Head of caudate nucleus (tissue), 42 donors: ENCODE measurements at regions of chr14 and their contacts with region 1.

Region 1: DNA sequence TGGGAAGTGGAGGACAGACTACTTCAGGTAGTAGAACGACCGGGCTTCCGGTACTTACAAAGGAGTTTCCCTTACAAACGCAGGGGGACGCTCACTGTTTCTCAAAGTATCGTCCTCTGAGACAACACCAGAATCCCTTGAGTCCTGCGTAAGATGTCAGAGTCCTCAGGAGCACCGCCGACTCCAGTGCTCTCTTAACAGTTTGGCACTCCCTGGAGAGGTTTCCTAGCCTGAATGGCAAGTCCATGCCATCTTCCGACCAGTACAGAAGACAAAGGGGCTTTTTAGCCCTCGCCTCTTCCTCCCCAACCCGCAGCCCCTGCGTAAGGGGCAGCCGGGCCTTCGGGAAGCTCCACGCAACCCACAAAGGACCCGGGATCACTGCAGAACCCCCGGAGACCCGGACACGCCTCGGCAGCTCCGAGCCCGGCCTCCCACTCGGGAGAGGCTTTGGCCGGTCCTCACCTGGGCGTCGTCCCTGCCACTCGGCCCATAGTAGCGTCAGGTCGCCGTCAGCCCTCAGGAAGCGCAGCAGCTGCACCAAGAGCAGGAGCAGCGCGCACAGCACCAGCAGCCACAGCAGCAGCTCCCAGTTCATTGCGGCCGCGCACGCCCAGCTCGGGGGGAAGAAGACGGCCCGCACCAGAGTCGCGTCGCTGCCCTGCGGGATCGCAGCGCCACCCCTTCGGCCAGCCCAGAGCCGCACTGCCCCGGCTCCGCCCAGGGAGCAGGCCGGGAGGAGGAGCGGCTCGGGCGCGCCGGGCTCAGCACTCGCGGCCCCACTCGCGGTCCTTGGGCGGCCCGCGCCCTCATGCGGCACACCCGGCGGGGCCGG is at the start of gene DHRS7:
- DNase-seq: peak; percentile 57 to 94 (median 86)

Region 2: DNA sequence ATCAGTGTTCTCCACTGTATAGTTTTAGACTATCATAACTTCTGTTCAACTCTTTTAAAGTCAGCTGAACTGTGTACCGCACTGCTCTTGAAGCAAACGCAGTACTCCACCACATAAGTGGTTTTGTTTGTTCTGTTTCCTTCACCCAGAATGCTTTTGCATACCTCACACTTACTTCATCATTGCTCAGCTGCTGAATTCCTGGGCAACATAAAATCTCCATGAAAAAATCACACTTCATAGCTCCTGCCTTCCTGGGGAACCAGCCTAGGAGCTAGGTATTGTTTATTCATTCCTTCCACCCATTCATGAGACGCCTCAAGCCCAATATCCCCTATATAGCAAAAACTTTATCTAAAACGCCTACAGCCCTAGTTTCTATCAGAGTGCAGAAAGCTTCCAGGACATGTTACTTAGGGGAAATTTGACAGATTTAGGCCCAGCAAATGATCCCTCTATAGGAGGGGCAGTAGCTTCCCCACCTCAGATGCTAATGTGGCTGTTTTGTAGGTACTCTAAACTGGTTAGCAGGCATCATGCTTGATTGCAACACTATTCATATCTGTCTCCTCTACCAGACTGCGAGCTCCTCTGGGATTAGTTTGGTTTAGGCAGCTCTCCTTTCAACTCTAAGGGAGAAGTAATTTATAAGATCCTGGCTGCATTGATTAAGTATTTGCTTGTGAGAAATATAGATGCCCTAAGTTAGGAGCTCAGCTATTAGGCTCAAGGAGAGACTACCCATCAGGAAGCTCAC is 200.5 kb before region 1 on chr14:
- intact Hi-C with region 1: loop called (anchors 5 kb)
- DNase-seq: no peak

Region 3: GRCh38 chr14:60079724-60080123 is 85.2 kb before region 1 on chr14:
- intact Hi-C with region 1: loop called (anchors 5 kb)
- DNase-seq: no peak

Region 4: DNA sequence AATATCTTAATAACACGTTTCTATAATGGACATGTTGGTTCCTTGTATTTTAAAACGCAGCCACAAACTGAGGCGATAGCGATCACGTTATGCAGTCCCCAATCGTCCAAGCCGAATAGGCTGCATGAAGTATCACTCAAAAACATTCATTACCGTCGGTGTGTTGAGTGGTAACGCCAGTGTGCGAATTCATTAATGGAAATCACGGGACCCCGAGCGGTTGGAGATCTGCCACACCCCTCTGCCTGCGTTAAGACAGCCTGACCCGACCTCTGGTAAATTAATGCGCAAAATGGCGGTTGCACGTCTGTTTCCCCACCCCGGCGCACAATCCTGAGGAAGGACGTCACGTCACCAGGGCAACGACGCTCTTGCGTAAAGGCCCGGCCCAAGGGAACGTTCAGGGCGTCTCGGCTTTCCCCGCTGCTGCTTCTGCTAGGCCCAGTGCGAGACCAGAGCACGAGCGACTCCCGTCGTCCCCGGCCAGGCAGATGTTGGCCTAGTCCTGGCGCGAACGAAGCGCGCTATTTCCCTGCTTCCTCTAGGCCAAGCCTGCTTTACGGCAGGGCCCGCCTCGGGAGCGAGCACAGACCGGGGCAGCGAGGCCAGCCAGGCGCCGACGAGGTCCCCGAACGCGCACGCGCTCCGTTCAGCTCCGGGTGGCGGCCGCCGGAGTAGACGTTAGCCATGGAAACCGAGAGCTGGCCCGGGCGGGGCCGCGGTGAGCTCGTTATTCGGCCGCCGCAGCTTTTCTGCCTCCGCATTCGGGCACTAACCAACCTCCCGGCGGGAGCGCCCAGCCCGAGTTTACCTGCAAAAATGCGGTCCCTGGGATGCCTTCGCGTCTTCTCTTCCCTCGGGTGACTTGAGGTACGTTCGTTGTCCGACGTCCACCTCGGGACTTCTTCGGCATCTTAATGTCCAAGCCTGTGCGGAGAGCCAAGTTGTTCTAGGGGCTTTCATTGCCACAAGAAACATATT is 73.1 kb before region 1 on chr14 and contains the start of gene PCNX4:
- intact Hi-C with region 1: loop called (anchors 5 kb)
- DNase-seq: peak; percentile 93 to 99 (median 97)

Region 5: DNA sequence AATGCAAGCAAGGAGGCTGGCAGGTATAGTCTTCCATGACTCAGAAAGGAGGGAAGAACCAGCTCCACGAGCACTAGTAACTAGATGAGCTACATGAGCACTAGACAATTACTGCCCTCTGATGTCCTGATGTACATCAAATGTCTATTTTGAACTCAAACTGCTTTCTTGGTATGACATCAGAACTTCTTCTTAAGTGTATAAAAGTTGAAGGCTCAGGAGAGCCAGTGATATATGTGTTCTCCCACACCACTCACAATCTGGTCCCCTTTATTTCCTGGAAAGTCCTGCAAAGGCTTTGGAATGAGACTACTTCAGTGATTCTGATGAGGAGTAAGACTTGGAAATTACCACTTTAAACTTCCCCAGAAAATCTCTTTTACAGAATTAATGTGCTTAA is 18.8 kb after region 1 on chr14:
- intact Hi-C with region 1: loop called (anchors 2 kb)
- DNase-seq: no peak